Heart left ventricle (tissue), 16 donors: ENCODE measurements at regions of chr5 and their contacts with region 1.

Region 1: GRCh38 chr5:173757403-173758209 is 130.5 kb upstream of the CPEB4 start:
- DNase-seq: no peak
- ATAC-seq: peak in 2 of 4 donors; percentile 18 to 40
- H3K4me3 ChIP-seq: no peak overlapping the region
- H3K27ac ChIP-seq: no peak overlapping the region
- H3K4me1 ChIP-seq: peaks cover 0 to 28% (median 2%) of the 10 kb centered on the region in 12 donors
- H3K27me3 ChIP-seq: no peaks in the 10 kb centered on the region
- CTCF ChIP-seq: no peak
- POLR2A ChIP-seq: no peak

Region 2: GRCh38 chr5:173671121-173671949 is 86.3 kb before region 1 on chr5:
- intact Hi-C with region 1: loop called in 1 of 10 experiments (anchors 5 kb)
- DNase-seq: peak; percentile 30 to 89 (median 38)
- ATAC-seq: peak; percentile 65 to 88 (median 76)
- H3K4me3 ChIP-seq: peak overlapping the region in 3 of 12 donors; percentile 6 to 19 (median 11)
- H3K27ac ChIP-seq: peak overlapping the region in 8 of 12 donors; percentile 20 to 67 (median 45)
- H3K4me1 ChIP-seq: peaks cover 0 to 34% (median 17%) of the 10 kb centered on the region in 12 donors
- H3K27me3 ChIP-seq: no peaks in the 10 kb centered on the region
- CTCF ChIP-seq: no peak
- POLR2A ChIP-seq: no peak

Region 3: GRCh38 chr5:173707392-173707791 is 50.2 kb before region 1 on chr5:
- intact Hi-C with region 1: loop called in 2 of 10 experiments (anchors 5 kb)
- DNase-seq: peak; percentile 63 to 80 (median 73)
- ATAC-seq: peak; percentile 79 to 90 (median 88)
- H3K4me3 ChIP-seq: no peak overlapping the region
- H3K27ac ChIP-seq: peak overlapping the region; percentile 8 to 79 (median 63)
- H3K4me1 ChIP-seq: peaks cover 0 to 31% (median 16%) of the 10 kb centered on the region in 12 donors
- H3K27me3 ChIP-seq: no peaks in the 10 kb centered on the region
- CTCF ChIP-seq: no peak
- POLR2A ChIP-seq: no peak